ENCODE measurements at regions of chr4 and their contacts with region 1.

Region 1: DNA sequence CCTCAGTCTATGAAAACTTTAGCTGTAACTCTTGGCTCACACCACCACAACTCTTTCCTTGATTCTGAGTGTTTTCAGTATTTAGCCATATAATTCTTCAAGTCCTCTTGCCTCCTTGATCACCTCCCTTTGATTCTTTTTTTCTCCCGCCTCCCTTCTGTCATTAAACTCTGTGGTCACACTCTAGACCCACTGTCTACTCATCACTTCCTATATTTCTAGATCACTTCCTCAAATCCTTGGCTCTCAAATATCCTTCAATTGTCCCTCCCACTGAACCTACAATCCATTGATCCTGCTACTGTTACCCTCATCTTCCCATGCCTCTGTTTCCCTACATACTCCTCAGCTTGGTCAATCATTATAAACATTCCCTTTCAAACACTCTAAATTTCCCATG is 12.4 kb upstream of the CXXC4 start:
- DNase-seq: no peak
- H3K4me3 ChIP-seq: no peak overlapping the region
- H3K4me3 Mint-ChIP-seq: no peak overlapping the region
- H3K27ac Mint-ChIP-seq: no peak overlapping the region
- H3K4me1 ChIP-seq: peaks cover 56% of the 10 kb centered on the region
- H3K4me1 Mint-ChIP-seq: peaks cover 25% of the 10 kb centered on the region
- H3K27me3 ChIP-seq: no peaks in the 10 kb centered on the region
- H3K27me3 Mint-ChIP-seq: no peaks in the 10 kb centered on the region
- CTCF ChIP-seq: no peak

Region 2: DNA sequence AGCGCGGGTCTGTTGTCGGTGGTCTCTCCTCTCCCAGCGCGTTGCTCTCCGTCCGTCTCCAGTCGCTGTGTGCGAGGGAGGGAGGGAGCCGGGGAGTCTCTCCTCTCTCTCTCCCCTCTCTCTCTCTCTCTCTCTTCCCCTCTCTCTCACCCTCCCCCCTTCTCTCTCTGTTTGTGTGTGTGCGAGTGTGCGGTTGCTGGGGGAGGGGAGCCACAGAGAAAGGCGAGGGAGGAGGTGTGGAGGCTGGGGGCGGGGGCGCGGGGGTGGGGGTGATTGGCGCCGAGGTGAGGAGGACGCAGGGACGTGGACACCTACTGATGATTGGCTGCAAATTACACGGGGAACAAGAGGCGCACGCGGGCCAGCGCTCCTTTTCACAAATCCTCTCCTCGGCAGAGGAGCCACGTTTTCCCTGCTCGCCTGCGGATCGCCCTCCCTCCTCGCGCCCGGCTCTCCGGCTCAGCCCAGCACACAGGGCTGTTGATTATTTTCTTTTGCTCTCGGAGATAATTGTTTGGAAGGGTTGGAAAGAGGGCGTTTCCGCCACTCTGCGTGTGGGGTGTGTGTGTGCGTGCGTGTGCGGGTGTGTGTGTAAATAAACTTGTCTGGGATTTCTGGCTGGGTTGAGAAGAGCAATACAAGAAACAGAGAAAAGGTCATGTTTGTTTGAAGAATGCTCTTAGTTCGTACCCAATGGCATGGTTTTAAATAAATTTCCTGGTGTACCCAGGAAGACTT is 12.1 kb before region 1 on chr4 and contains the start of gene CXXC4:
- CTCF ChIA-PET with region 1: no interaction called
- POLR2A ChIA-PET with region 1: no interaction called
- intact Hi-C with region 1: loop called (anchors 1 kb)
- DNase-seq: peak; percentile 67 to 74
- H3K4me3 ChIP-seq: peak within 1 kb of the TSS; percentile 54
- H3K4me3 Mint-ChIP-seq: peak within 1 kb of the TSS; percentile 96
- H3K27ac Mint-ChIP-seq: peak within 1 kb of the TSS; percentile 86
- H3K4me1 ChIP-seq: peaks cover 15% of the 10 kb centered on the region
- H3K4me1 Mint-ChIP-seq: peaks cover 6% of the 10 kb centered on the region
- H3K27me3 ChIP-seq: no peaks in the 10 kb centered on the region; the same call in 1 of the 2 replicates
- H3K27me3 Mint-ChIP-seq: no peaks in the 10 kb centered on the region
- CTCF ChIP-seq: no peak
- total RNA-seq, gene CXXC4: 2.9 and 3.1 TPM in 2 replicates